Naive thymus-derived CD4-positive, alpha-beta T cell (primary cell): ENCODE measurements at regions of chr20 and their contacts with region 1.

Region 1: GRCh38 chr20:62143118-62143973 is at the starts of genes PSMA7 and SS18L1:
- DNase-seq: peak; percentile 79 to 90 (median 87)
- ATAC-seq: peak; percentile 91
- H3K4me3 ChIP-seq: peak within 1 kb of the TSS; percentile 65
- H3K4me3 Mint-ChIP-seq: peak within 1 kb of the TSS; percentile 89 to 98 (median 92)
- H3K27ac ChIP-seq: peak within 1 kb of the TSS; percentile 75
- H3K27ac Mint-ChIP-seq: peak within 1 kb of the TSS; percentile 80 to 97 (median 93)
- H3K4me1 ChIP-seq: peaks cover 28 to 36% of the 10 kb centered on the region in 2 donors
- H3K4me1 Mint-ChIP-seq: peaks cover 36 to 64% (median 55%) of the 10 kb centered on the region in 7 donors
- H3K27me3 ChIP-seq: no peaks in the 10 kb centered on the region
- H3K27me3 Mint-ChIP-seq: no peaks in the 10 kb centered on the region
- total RNA-seq, gene PSMA7: 125 to 301 (median 165) TPM
- total RNA-seq, gene SS18L1: 17.8 to 26.7 (median 22.6) TPM

Region 2: GRCh38 chr20:61912665-61913422 is 230.5 kb before region 1 on chr20:
- CTCF ChIA-PET with region 1: no interaction called
- POLR2A ChIA-PET with region 1: no interaction called
- intact Hi-C with region 1: no loop called
- DNase-seq: no peak
- ATAC-seq: no peak
- H3K4me3 ChIP-seq: no peak overlapping the region
- H3K4me3 Mint-ChIP-seq: no peak overlapping the region
- H3K27ac ChIP-seq: no peak overlapping the region
- H3K27ac Mint-ChIP-seq: peak overlapping the region in 1 of 9 donors; percentile 42
- H3K4me1 ChIP-seq: no peaks in the 10 kb centered on the region
- H3K4me1 Mint-ChIP-seq: peaks cover 0 to 12% (median 0%) of the 10 kb centered on the region in 7 donors
- H3K27me3 ChIP-seq: no peaks in the 10 kb centered on the region
- H3K27me3 Mint-ChIP-seq: peaks cover 0 to 23% (median 6%) of the 10 kb centered on the region in 5 donors

Region 3: GRCh38 chr20:62156592-62157386 is 13.4 kb after region 1 on chr20:
- CTCF ChIA-PET with region 1: interaction called, 4 read pairs
- POLR2A ChIA-PET with region 1: interaction called, 4 read pairs
- intact Hi-C with region 1: loop called in 1 of 2 experiments (anchors 2 kb)
- DNase-seq: peak; percentile 56 to 75 (median 69)
- ATAC-seq: peak; percentile 93
- H3K4me3 ChIP-seq: no peak overlapping the region
- H3K4me3 Mint-ChIP-seq: peak overlapping the region in 1 of 10 donors; percentile 45
- H3K27ac ChIP-seq: no peak overlapping the region
- H3K27ac Mint-ChIP-seq: no peak overlapping the region
- H3K4me1 ChIP-seq: peaks cover 0 to 3% of the 10 kb centered on the region in 2 donors
- H3K4me1 Mint-ChIP-seq: peaks cover 7 to 30% (median 19%) of the 10 kb centered on the region in 7 donors
- H3K27me3 ChIP-seq: no peaks in the 10 kb centered on the region
- H3K27me3 Mint-ChIP-seq: no peaks in the 10 kb centered on the region

Region 4: DNA sequence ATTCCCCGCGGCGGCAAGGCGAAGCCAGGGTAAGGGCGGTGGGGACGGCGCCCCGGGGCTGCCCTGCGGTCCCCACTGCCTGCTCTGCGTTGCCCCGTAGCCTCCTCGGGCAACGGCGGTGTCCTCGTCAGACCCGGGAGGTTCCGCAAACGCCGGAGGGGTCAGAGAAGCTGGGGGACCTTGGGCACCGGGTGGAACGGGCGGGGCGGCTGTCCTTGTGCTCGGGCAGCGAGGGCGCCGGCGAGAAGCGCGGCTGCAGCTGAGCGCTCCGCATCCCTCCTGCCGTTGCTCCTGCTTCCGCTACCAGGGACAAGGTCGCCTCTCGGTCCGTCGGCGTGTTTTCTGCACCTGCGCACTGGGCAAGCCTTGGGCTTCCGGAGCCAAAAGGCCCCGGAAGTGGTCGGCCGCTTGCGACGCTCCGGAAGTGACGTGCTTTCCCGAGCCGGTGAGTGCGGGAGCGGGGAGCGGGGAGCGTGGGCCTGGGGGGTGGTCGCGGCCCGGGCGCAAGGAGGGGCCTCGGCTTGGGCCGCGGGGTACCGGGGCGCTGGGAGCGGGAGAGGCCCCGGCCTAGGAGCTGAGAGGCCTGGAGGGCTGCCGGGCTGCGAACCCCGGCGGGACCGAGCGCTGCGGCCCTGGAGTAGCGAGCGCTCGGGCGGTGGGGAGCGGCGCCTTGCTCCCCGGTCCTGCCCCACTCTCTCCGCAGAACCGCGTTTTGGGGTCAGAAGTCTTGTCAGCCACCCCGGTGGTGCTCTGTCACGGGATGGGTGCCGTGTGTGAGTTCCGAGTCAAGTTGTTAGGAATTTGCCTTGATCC is 39.5 kb after region 1 on chr20 and contains the start of gene MTG2:
- CTCF ChIA-PET with region 1: no interaction called
- POLR2A ChIA-PET with region 1: interaction called, 7 read pairs
- intact Hi-C with region 1: loop called (anchors 1 kb)
- DNase-seq: peak; percentile 81 to 94 (median 93)
- ATAC-seq: peak; percentile 95
- H3K4me3 ChIP-seq: peak within 1 kb of the TSS; percentile 87
- H3K4me3 Mint-ChIP-seq: peak within 1 kb of the TSS; percentile 84 to 95 (median 90)
- H3K27ac ChIP-seq: peak within 1 kb of the TSS; percentile 92
- H3K27ac Mint-ChIP-seq: peak within 1 kb of the TSS; percentile 90 to 97 (median 95)
- H3K4me1 ChIP-seq: peaks cover 9 to 16% of the 10 kb centered on the region in 2 donors
- H3K4me1 Mint-ChIP-seq: peaks cover 15 to 55% (median 42%) of the 10 kb centered on the region in 7 donors
- H3K27me3 ChIP-seq: no peaks in the 10 kb centered on the region
- H3K27me3 Mint-ChIP-seq: no peaks in the 10 kb centered on the region
- total RNA-seq, gene MTG2: 20.4 to 51.5 (median 41.8) TPM